ENCODE measurements at regions of chr1 and their contacts with region 1.

Region 1: DNA sequence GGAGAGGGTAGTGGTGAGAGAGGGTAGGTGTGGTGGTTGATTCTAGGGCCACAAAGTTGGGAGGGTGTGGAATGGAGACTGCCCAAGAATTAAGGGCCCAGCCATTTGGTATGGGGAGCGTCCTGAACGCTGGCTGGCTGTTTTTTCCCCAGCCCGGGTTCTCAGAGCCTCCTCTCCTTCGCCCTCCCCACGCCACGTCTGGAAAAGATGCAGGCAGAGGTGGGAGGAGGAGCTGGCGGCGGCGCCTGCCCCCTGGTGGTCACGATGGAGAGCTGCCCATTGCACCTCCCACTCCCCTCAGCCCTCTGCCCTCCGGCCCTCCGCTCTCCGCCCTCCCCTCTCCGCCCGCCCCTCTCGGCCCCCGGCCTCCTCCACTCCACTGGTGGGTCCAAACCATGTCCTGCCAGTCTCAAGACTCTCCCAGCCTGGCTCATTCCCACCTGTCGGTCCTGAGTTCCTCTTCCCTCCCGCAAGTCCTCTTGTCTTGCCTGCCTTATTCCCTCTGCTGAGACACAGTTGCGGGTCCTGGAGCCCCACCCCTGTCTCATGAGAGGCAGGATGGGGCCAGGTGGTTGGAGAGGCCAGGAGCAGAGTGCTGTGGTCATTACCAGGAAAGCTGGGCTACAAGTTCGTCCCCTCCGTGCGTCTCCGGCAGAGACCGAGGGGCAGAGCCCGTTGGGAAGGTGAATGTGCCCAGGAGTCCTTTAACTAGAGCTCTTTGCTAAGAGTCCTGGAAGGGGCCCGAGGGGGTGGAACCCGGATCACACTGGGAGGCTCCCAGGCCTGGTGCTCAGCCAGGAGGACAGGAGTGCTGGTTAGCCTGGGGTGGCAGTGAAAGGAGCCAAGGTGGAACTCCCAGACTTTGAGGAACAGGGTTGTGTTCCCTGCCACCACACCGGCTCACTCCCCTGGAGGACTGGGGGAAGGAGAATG is 22.6 kb downstream of the ETNK2 start:
- DNase-seq: peak; percentile 76 to 77
- H3K4me3 ChIP-seq: peak overlapping the region; percentile 11; the same call in 1 of the 2 replicates
- H3K4me3 Mint-ChIP-seq: peak overlapping the region; percentile 70
- H3K27ac Mint-ChIP-seq: peak overlapping the region; percentile 71
- H3K4me1 ChIP-seq: peaks cover 5% of the 10 kb centered on the region; the same call in 1 of the 2 replicates
- H3K4me1 Mint-ChIP-seq: peaks cover 19% of the 10 kb centered on the region
- H3K27me3 ChIP-seq: no peaks in the 10 kb centered on the region
- H3K27me3 Mint-ChIP-seq: no peaks in the 10 kb centered on the region
- CTCF ChIP-seq: peak; percentile 92 to 96

Region 2: DNA sequence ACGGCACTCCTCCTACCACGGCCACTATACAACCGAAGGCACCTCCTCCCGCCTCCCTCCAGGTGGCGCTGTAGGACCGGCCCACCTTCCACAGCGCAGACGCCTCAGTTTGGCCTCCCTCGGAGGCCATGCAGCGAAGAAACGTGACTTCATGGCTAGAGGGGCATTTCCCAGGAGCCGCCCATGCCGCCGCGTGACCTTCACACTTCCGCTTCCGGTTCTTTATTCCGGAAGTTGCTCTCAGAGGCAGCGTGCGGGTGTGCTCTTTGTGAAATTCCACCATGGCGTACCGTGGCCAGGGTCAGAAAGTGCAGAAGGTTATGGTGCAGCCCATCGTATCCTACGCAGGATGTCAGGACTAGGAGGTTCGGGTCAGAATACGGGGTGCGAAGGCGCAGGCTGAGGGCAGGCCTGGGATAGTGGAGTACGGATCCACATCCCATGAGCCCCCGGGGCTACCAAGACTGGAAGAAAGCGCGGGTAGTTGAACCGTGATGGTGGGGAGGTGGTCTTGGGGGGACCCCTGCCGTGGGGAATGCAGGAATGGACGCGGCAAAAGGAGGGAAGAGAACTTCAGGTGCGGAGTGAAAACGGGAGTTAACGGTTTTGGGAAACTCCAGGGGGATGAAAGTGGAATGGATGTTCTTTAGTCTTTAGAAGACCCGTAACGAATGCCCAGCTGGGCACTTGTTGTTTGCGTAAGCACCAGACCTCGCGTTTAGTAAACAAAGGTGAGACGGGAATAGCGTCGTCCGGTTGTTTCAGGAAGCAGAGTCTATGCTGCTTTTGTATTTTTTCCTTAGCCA is 267.6 kb before region 1 on chr1 and contains the start of gene SNRPE:
- CTCF ChIA-PET with region 1: interaction called, 21 read pairs
- POLR2A ChIA-PET with region 1: interaction called, 3 read pairs
- intact Hi-C with region 1: loop called (anchors 1 kb)
- DNase-seq: peak; percentile 97
- H3K4me3 ChIP-seq: peak within 1 kb of the TSS; percentile 89
- H3K4me3 Mint-ChIP-seq: peak within 1 kb of the TSS; percentile 93
- H3K27ac Mint-ChIP-seq: peak within 1 kb of the TSS; percentile 98
- H3K4me1 ChIP-seq: peaks cover 20% of the 10 kb centered on the region
- H3K4me1 Mint-ChIP-seq: peaks cover 6% of the 10 kb centered on the region
- H3K27me3 ChIP-seq: no peaks in the 10 kb centered on the region
- H3K27me3 Mint-ChIP-seq: no peaks in the 10 kb centered on the region
- CTCF ChIP-seq: peak; percentile 89 to 96
- total RNA-seq, gene SNRPE: 236 and 264 TPM in 2 replicates

Region 3: GRCh38 chr1:203871107-203871875 is 257.9 kb before region 1 on chr1:
- CTCF ChIA-PET with region 1: interaction called, 60 read pairs
- POLR2A ChIA-PET with region 1: interaction called, 4 read pairs
- intact Hi-C with region 1: loop called (anchors 1 kb)
- DNase-seq: peak; percentile 48 to 65
- H3K4me3 ChIP-seq: no peak overlapping the region
- H3K4me3 Mint-ChIP-seq: no peak overlapping the region
- H3K27ac Mint-ChIP-seq: no peak overlapping the region
- H3K4me1 ChIP-seq: no peaks in the 10 kb centered on the region
- H3K4me1 Mint-ChIP-seq: peaks cover 7% of the 10 kb centered on the region
- H3K27me3 ChIP-seq: no peaks in the 10 kb centered on the region
- H3K27me3 Mint-ChIP-seq: no peaks in the 10 kb centered on the region
- CTCF ChIP-seq: peak; percentile 90 to 96

Region 4: DNA sequence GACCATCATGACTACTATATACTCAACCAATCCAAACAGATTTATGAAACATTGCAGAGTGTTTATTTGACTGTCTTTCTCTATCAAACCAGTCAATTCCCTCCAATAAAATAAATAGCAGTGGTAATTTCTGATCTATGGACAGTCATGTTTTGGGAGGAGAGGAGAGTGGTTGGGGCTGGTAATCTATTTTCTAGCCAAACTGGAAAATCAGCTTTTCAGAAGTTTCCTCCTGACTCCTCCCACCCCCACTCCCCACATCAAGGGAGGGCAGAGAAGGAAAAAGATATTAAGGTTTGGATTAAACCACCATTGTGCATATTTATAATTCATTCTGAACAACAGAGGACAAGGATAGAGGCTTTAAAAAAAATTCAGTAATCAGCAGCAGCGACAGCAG is 125.7 kb before region 1 on chr1:
- CTCF ChIA-PET with region 1: no interaction called
- POLR2A ChIA-PET with region 1: no interaction called
- intact Hi-C with region 1: loop called (anchors 10 kb)
- DNase-seq: peak in 1 of 2 experiments; percentile 27
- H3K4me3 ChIP-seq: no peak overlapping the region
- H3K4me3 Mint-ChIP-seq: no peak overlapping the region
- H3K27ac Mint-ChIP-seq: no peak overlapping the region
- H3K4me1 ChIP-seq: peaks cover 11% of the 10 kb centered on the region
- H3K4me1 Mint-ChIP-seq: peaks cover 20% of the 10 kb centered on the region
- H3K27me3 ChIP-seq: no peaks in the 10 kb centered on the region
- H3K27me3 Mint-ChIP-seq: no peaks in the 10 kb centered on the region
- CTCF ChIP-seq: no peak

Region 5: GRCh38 chr1:204051258-204051657 is 78.0 kb before region 1 on chr1:
- CTCF ChIA-PET with region 1: no interaction called
- POLR2A ChIA-PET with region 1: interaction called, 11 read pairs
- intact Hi-C with region 1: no loop called
- DNase-seq: no peak
- H3K4me3 ChIP-seq: no peak overlapping the region
- H3K4me3 Mint-ChIP-seq: no peak overlapping the region
- H3K27ac Mint-ChIP-seq: no peak overlapping the region
- H3K4me1 ChIP-seq: no peaks in the 10 kb centered on the region
- H3K4me1 Mint-ChIP-seq: no peaks in the 10 kb centered on the region
- H3K27me3 ChIP-seq: no peaks in the 10 kb centered on the region
- H3K27me3 Mint-ChIP-seq: no peaks in the 10 kb centered on the region
- CTCF ChIP-seq: no peak

Region 6: DNA sequence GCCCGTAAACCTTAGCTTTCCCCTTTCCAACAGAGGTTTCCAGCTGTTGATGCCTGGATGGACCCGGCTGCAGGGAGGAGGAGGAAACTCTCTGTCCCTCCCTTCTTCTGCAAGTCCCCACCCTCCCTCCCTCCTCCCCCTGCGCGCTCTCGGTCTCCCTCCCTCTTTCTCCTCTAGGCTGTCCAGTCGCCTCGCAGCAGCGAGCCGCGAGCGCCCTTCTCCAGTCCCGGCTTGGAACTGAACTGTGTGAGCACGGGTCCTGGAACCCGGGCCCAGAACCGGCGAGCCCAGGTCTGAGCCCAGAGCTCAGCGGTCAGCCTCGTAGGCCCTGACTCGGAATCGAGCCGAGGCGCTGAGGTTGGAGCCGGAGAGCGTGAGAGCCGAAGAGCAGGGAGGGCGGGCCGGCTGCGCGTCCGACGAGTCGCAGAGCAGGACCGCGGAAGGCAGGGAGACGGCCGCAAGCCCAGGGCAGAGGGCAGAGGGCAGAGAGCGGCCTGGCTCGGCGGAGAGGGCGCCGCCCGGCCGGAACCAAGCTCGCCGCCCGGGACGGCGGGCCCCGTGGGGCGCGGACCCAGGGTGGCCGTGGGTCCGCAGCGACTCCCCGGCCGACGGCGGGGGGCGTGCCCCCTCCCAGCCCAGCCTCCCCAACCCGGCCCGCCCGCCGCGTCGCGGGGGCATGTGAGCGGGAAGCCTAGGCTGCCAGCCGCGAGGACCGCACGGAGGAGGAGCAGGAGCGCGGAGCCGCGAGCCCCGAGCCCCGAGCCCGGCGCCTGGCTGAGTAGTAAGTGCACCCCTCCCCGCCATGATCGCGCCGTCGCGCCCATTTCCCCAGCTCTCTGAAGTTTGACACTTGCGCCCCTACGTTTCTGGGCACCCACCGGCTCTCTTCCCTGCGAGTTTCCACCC is 56.0 kb before region 1 on chr1 and contains the start of gene SOX13:
- CTCF ChIA-PET with region 1: interaction called, 16 read pairs
- POLR2A ChIA-PET with region 1: interaction called, 4 read pairs
- intact Hi-C with region 1: loop called (anchors 2 kb)
- DNase-seq: peak; percentile 86 to 88
- H3K4me3 ChIP-seq: peak within 1 kb of the TSS; percentile 96
- H3K4me3 Mint-ChIP-seq: peak within 1 kb of the TSS; percentile 90
- H3K27ac Mint-ChIP-seq: peak within 1 kb of the TSS; percentile 74
- H3K4me1 ChIP-seq: peaks cover 15% of the 10 kb centered on the region
- H3K4me1 Mint-ChIP-seq: peaks cover 20% of the 10 kb centered on the region
- H3K27me3 ChIP-seq: no peaks in the 10 kb centered on the region
- H3K27me3 Mint-ChIP-seq: no peaks in the 10 kb centered on the region
- CTCF ChIP-seq: peak in 1 of 2 experiments; percentile 24
- total RNA-seq, gene SOX13: 31.5 and 34.5 TPM in 2 replicates

Region 7: DNA sequence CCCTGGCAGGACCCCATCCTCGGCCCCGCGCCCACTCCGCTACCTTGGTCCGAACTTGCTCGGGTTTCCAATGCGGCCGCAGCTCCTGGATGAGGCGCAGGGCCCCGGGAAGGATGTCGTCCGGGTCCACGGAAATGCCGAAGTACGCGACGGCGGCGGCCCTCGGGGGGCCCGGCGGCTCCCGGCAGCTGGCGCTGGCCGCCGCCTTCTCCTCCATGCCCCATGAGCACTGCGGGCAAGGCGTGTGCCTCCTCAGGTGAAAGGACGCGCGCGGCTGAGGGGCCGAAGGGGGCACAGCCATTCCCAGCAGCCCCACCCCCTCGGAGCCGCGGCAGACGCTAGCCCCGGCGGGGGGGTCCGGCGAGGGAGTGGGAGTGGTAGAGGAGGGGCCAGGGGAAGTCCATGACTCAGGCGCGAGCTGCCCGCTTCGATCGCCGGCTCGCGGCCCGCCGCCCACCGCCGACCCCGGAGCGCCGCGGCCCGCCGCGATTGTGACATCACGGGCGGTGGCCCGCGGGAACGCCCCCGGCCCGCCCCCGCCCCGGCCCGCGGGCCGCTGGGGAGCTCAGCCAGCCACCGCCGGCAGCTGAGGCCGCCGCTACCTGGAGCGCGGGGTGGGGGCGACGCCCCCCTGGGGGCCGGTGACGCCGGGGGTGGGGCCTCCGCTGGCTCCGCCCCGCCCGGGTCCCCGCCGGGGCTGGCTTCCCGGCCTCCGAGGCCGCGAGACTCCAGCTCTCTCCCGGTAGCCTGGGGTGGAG is 22.5 kb after region 1 on chr1 and contains the start of gene ETNK2:
- CTCF ChIA-PET with region 1: no interaction called
- POLR2A ChIA-PET with region 1: no interaction called
- intact Hi-C with region 1: no loop called
- DNase-seq: peak; percentile 76 to 84
- H3K4me3 ChIP-seq: peak within 1 kb of the TSS; percentile 59
- H3K4me3 Mint-ChIP-seq: peak within 1 kb of the TSS; percentile 71
- H3K27ac Mint-ChIP-seq: no peak within 1 kb of the TSS
- H3K4me1 ChIP-seq: peaks cover 6% of the 10 kb centered on the region
- H3K4me1 Mint-ChIP-seq: no peaks in the 10 kb centered on the region
- H3K27me3 ChIP-seq: no peaks in the 10 kb centered on the region
- H3K27me3 Mint-ChIP-seq: no peaks in the 10 kb centered on the region
- CTCF ChIP-seq: no peak
- total RNA-seq, gene ETNK2: 16.2 and 21.9 TPM in 2 replicates